ENCODE measurements at regions of chr3 and their contacts with region 1.

Region 1: GRCh38 chr3:88003115-88003755 is 55.6 kb downstream of the CGGBP1 start:
- DNase-seq: peak; percentile 74
- H3K4me3 Mint-ChIP-seq: no peak overlapping the region
- H3K27ac Mint-ChIP-seq: no peak overlapping the region
- H3K4me1 Mint-ChIP-seq: peaks cover 5% of the 10 kb centered on the region
- H3K27me3 Mint-ChIP-seq: peaks cover 11% of the 10 kb centered on the region

Region 2: GRCh38 chr3:87260270-87260669 is 743.0 kb before region 1 on chr3:
- intact Hi-C with region 1: loop called (anchors 10 kb)
- DNase-seq: peak; percentile 82
- H3K4me3 Mint-ChIP-seq: no peak overlapping the region
- H3K27ac Mint-ChIP-seq: no peak overlapping the region
- H3K4me1 Mint-ChIP-seq: no peaks in the 10 kb centered on the region
- H3K27me3 Mint-ChIP-seq: peaks cover 8% of the 10 kb centered on the region

Region 3: GRCh38 chr3:87350364-87351199 is 652.7 kb before region 1 on chr3:
- intact Hi-C with region 1: loop called (anchors 2 kb)
- DNase-seq: peak; percentile 74
- H3K4me3 Mint-ChIP-seq: no peak overlapping the region
- H3K27ac Mint-ChIP-seq: no peak overlapping the region
- H3K4me1 Mint-ChIP-seq: no peaks in the 10 kb centered on the region
- H3K27me3 Mint-ChIP-seq: peaks cover 11% of the 10 kb centered on the region

Region 4: GRCh38 chr3:87771341-87772192 is 231.7 kb before region 1 on chr3:
- intact Hi-C with region 1: loop called (anchors 1 kb)
- DNase-seq: peak; percentile 78
- H3K4me3 Mint-ChIP-seq: no peak overlapping the region
- H3K27ac Mint-ChIP-seq: no peak overlapping the region
- H3K4me1 Mint-ChIP-seq: peaks cover 3% of the 10 kb centered on the region
- H3K27me3 Mint-ChIP-seq: peaks cover 19% of the 10 kb centered on the region

Region 5: DNA sequence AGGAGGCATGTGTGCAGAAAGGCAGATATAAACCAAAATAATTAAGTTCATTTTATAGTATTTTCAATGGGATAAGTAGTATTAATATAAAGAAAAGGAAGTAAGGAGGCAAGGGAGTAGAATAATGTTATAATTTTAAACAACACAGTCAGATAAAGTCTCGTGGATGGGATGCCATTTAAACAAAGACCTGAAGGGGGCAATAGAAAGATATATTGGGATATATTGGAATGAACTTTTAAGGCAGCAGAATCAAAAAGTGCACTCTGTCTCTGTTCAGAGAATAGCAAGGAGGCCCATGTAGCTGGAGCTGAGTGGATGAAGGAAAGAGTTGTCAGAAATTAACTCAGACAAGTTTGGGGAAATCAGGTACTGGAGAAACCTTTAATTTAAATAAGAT is 103.2 kb before region 1 on chr3:
- intact Hi-C with region 1: loop called (anchors 5 kb)
- DNase-seq: no peak
- H3K4me3 Mint-ChIP-seq: no peak overlapping the region
- H3K27ac Mint-ChIP-seq: no peak overlapping the region
- H3K4me1 Mint-ChIP-seq: no peaks in the 10 kb centered on the region
- H3K27me3 Mint-ChIP-seq: no peaks in the 10 kb centered on the region